RWPE1 (cell line): ENCODE measurements at regions of chr1 and their contacts with region 1.

Region 1: DNA sequence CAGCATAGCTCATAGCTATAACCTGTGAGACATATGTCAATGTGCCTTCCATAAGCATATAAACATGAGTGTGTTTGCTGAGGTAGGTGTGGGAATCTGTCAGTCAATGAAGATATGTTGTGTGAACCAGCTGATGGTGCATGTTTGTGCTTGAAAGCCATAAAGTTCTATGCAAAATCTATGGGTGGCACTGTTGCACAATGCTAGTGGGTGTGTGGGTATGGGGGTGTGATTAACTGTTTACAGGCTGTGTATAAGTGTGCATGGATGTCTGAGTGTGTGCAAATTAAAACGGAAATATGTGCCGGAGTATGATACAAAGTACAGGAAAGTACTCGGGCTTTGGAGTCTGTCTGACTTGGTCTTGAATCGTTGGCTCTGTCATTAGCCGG is 1.0 kb upstream of the ATP2B4 start:
- DNase-seq: peak; percentile 90
- H3K27ac ChIP-seq: peak overlapping the region; percentile 94
- CTCF ChIP-seq: no peak; the same call in 1 of the 2 replicates

Region 2: DNA sequence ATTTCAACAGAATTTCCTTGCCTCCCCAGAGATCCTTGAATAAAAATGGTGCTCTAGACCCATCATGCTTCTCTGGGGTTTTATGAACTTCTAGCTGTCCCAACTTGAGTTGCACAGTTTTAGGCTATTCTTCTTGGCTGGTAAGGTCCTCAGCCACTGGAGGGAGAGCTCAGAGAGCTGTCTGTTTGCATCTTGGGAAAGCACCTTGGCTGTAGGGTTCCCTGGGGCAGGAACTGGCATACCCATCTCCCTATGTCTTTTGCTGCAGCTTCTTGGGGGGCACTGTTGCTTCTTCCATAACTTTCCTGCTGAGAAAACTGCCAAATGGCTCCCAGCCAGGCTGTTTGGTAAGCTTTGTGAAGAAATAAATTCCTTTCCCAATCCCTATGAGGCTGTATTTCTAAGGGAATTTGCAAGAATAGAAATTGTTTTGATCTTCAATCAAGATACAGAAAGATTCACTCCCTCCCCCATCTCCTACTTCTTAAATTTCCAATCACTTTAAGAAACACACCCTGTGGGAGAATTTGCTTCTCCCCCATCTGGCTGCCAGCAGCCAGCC is 266.5 kb before region 1 on chr1:
- CTCF ChIA-PET with region 1: no interaction called
- POLR2A ChIA-PET with region 1: no interaction called
- DNase-seq: no peak
- H3K27ac ChIP-seq: no peak overlapping the region
- CTCF ChIP-seq: no peak

Region 3: DNA sequence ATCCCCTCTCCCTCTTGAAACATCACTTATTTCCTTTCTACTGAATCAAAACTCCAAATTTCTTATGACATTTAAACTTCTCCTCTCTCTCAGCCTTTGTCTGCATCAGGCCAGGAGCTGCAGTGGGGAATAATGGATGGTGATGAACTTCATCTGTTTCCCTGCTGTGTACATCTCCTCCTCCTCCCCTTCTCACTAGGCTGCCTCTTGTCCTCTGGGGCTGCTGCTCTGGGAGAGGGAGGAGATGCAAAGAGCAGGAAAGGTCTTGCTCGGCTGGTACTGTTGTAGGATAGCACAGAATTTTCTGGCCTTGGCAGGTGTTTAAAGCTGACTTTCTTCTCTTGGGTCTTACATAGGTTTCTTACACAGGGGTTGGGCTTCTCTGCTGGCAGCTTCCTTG is 243.6 kb before region 1 on chr1:
- CTCF ChIA-PET with region 1: interaction called, 10 read pairs
- POLR2A ChIA-PET with region 1: no interaction called
- DNase-seq: no peak
- H3K27ac ChIP-seq: no peak overlapping the region
- CTCF ChIP-seq: no peak

Region 4: GRCh38 chr1:203504397-203505250 is 121.0 kb before region 1 on chr1:
- CTCF ChIA-PET with region 1: interaction called, 14 read pairs
- POLR2A ChIA-PET with region 1: no interaction called
- DNase-seq: peak; percentile 93
- H3K27ac ChIP-seq: no peak overlapping the region
- CTCF ChIP-seq: peak; percentile 79

Region 5: DNA sequence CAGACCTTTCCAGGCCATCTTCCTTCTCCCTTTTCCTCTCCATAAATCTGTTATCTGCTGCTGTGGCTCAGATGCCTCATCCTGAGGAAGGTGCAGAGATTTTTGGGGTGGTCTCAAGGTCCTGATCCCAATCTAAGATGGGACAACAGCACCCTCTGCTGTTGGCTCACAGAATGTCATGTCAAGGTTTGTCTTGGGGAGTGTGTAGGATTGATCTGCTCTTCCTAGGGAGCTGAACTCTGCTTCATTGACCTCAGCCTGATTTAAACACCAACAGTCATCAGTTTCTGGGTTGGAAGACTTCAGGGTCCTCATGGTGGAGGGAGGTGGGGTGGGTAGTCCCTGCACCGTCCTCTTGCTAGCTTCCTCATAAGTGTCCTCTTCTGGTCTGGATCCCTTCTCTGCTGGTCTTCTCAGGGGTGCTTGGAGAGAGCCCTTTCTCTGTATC is 76.5 kb after region 1 on chr1:
- CTCF ChIA-PET with region 1: interaction called, 15 read pairs
- POLR2A ChIA-PET with region 1: no interaction called
- DNase-seq: peak; percentile 81
- H3K27ac ChIP-seq: no peak overlapping the region
- CTCF ChIP-seq: peak; percentile 77